Naive thymus-derived CD4-positive, alpha-beta T cell (primary cell): ENCODE measurements at regions of chr4 and their contacts with region 1.

Region 1: DNA sequence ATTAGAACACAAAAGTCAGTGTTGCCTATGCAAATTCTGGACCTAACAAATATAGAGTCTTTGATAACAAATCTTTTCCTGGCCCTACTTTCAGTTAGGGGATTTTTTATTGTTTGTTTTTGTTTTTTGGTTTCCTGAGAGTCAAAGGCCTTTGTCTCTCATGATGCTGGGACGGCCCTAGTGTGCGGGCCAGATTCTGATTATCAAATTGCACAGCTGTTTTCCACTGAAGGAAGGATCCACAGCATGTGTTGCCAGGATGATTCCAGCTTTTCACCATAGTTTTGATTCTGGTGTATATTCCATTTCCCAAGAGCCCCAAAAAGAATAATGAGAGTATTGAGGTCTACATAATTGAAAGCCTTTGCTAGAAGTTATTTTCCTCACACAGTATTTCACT is 248.2 kb downstream of the CAMK2D start:
- DNase-seq: no peak
- ATAC-seq: no peak
- H3K4me3 ChIP-seq: no peak overlapping the region
- H3K4me3 Mint-ChIP-seq: no peak overlapping the region
- H3K27ac ChIP-seq: no peak overlapping the region
- H3K27ac Mint-ChIP-seq: no peak overlapping the region
- H3K4me1 ChIP-seq: no peaks in the 10 kb centered on the region
- H3K4me1 Mint-ChIP-seq: peaks cover 0 to under 1% (median 0%) of the 10 kb centered on the region in 7 donors
- H3K27me3 ChIP-seq: no peaks in the 10 kb centered on the region
- H3K27me3 Mint-ChIP-seq: no peaks in the 10 kb centered on the region

Region 2: GRCh38 chr4:113528395-113528794 is 15.0 kb after region 1 on chr4:
- CTCF ChIA-PET with region 1: no interaction called
- POLR2A ChIA-PET with region 1: no interaction called
- intact Hi-C with region 1: loop called in 1 of 2 experiments (anchors 2 kb)
- DNase-seq: no peak
- ATAC-seq: no peak
- H3K4me3 ChIP-seq: no peak overlapping the region
- H3K4me3 Mint-ChIP-seq: no peak overlapping the region
- H3K27ac ChIP-seq: no peak overlapping the region
- H3K27ac Mint-ChIP-seq: peak overlapping the region in 1 of 9 donors; percentile 26
- H3K4me1 ChIP-seq: no peaks in the 10 kb centered on the region
- H3K4me1 Mint-ChIP-seq: peaks cover 0 to 14% (median 0%) of the 10 kb centered on the region in 7 donors
- H3K27me3 ChIP-seq: no peaks in the 10 kb centered on the region
- H3K27me3 Mint-ChIP-seq: no peaks in the 10 kb centered on the region